ENCODE measurements at regions of chr7 and their contacts with region 1.

Region 1: DNA sequence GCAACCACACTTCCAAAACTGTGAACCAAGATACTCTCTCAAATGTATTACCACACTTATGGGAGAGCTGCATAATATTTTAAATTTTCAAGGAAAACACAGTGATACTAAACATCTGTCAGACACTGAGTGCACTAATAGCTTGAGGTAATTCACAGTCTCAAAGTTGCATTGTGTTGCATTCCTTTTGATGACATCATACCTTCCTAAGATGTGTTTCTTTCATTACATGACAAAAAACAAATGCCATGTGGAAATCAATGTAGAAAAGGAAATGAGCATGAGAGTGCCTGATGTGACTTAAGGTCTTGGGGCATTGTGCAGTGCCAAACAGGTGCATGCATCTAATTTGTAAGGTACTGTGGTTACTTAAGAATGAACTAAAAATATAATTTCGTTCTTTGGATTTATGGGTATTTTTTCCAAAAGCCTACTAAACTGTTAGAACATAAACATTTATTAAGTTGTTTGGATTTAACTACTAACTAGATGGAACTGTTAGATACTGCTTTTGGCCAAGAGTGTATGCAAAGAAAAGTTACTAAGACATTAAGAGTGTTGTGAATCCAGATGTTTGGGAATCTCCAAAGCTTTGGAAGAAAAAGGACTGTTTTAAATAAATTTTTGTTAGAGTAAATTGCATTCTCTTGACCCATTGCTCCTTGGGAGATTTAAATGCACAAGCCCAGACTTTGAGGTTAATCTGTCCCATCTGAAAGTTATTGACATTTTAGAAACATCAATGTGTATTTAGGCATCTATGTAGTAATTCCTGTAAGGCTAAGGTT is 496.2 kb upstream of the SEMA3D start:
- DNase-seq: peak; percentile 24
- H3K4me3 ChIP-seq: no peak overlapping the region
- H3K27ac ChIP-seq: no peak overlapping the region
- H3K4me1 ChIP-seq: no peaks in the 10 kb centered on the region
- H3K27me3 ChIP-seq: no peaks in the 10 kb centered on the region
- CTCF ChIP-seq: no peak

Region 2: DNA sequence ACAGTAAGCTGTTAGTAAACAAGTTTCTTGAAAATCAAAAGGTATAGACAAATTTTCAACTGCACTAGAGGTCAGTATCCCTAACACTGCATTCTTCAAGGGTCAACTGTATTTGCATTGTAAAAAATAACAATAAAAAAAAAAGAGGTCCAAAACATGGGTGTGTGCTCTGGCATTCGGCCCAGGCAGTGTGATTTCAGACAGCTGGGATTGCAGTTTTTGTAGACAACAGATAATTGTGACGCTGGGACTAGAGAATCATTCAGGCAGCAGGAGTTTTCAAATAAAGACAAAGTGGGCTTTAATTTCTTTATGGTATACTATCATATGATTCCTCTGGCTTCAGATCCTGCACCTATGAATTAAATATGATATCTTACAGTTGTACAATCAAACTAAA is 47.0 kb after region 1 on chr7:
- CTCF ChIA-PET with region 1: no interaction called
- POLR2A ChIA-PET with region 1: no interaction called
- intact Hi-C with region 1: loop called (anchors 5 kb)
- DNase-seq: no peak
- H3K4me3 ChIP-seq: no peak overlapping the region
- H3K27ac ChIP-seq: no peak overlapping the region
- H3K4me1 ChIP-seq: no peaks in the 10 kb centered on the region
- H3K27me3 ChIP-seq: no peaks in the 10 kb centered on the region
- CTCF ChIP-seq: no peak